Activated CD4-positive, alpha-beta T cell treated with anti-CD3 and anti-CD28 coated beads for 36 hours (primary cell): ENCODE measurements at regions of chr3 and their contacts with region 1.

Region 1: GRCh38 chr3:22089284-22089683 is 338.3 kb upstream of the ZNF385D start:
- DNase-seq: no peak
- ATAC-seq: no peak
- H3K4me3 Mint-ChIP-seq: no peak overlapping the region
- H3K27ac Mint-ChIP-seq: no peak overlapping the region
- H3K4me1 Mint-ChIP-seq: no peaks in the 10 kb centered on the region
- H3K27me3 Mint-ChIP-seq: no peaks in the 10 kb centered on the region

Region 2: DNA sequence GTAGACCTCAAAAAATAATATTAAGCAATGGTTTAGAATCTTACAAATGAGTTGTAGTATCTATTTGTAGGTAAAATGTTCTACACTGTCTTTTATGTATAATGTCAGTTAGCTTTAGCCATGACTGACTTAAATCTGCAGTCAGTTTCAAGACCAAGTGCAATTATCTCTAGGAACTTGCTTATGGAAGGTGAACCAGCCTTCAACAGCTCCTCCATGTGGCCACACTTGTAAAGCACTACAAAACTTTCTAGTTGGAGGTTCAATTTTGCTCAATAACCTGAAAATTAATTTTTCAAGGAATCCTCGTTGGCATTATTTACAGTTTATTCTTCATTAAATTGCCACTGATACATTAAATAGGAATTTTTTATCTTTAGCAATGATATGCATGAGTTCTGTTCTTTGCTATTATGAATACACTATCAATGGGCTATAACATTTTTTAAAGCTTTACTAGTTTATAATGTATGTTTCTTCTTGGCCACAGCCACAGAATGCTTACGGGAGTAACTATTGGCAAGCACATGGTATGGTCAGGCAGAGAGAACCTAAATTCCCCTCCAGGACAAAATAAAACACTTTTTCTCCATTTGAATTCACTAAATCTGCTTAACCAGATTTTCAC is 798.5 kb after region 1 on chr3:
- CTCF ChIA-PET with region 1: no interaction called
- POLR2A ChIA-PET with region 1: no interaction called
- intact Hi-C with region 1: loop called in 1 of 2 experiments (anchors 5 kb)
- DNase-seq: peak; percentile 6
- ATAC-seq: no peak
- H3K4me3 Mint-ChIP-seq: no peak overlapping the region
- H3K27ac Mint-ChIP-seq: no peak overlapping the region
- H3K4me1 Mint-ChIP-seq: no peaks in the 10 kb centered on the region
- H3K27me3 Mint-ChIP-seq: no peaks in the 10 kb centered on the region

Region 3: GRCh38 chr3:22960105-22960984 is 871.1 kb after region 1 on chr3:
- CTCF ChIA-PET with region 1: no interaction called
- POLR2A ChIA-PET with region 1: no interaction called
- intact Hi-C with region 1: loop called in 1 of 2 experiments (anchors 1 kb)
- DNase-seq: peak; percentile 32
- ATAC-seq: no peak
- H3K4me3 Mint-ChIP-seq: no peak overlapping the region
- H3K27ac Mint-ChIP-seq: no peak overlapping the region
- H3K4me1 Mint-ChIP-seq: peaks cover 6% of the 10 kb centered on the region
- H3K27me3 Mint-ChIP-seq: no peaks in the 10 kb centered on the region